WTC11 (cell line): ENCODE measurements at regions of chr1 and their contacts with region 1.

Region 1: GRCh38 chr1:49036700-49037099 is 260.0 kb upstream of the BEND5 start:
- DNase-seq: peak; percentile 24
- ATAC-seq: peak; percentile 92
- H3K4me3 Mint-ChIP-seq: no peak overlapping the region
- H3K27ac Mint-ChIP-seq: no peak overlapping the region
- H3K4me1 Mint-ChIP-seq: no peaks in the 10 kb centered on the region
- H3K27me3 Mint-ChIP-seq: no peaks in the 10 kb centered on the region
- CTCF ChIP-seq: no peak

Region 2: DNA sequence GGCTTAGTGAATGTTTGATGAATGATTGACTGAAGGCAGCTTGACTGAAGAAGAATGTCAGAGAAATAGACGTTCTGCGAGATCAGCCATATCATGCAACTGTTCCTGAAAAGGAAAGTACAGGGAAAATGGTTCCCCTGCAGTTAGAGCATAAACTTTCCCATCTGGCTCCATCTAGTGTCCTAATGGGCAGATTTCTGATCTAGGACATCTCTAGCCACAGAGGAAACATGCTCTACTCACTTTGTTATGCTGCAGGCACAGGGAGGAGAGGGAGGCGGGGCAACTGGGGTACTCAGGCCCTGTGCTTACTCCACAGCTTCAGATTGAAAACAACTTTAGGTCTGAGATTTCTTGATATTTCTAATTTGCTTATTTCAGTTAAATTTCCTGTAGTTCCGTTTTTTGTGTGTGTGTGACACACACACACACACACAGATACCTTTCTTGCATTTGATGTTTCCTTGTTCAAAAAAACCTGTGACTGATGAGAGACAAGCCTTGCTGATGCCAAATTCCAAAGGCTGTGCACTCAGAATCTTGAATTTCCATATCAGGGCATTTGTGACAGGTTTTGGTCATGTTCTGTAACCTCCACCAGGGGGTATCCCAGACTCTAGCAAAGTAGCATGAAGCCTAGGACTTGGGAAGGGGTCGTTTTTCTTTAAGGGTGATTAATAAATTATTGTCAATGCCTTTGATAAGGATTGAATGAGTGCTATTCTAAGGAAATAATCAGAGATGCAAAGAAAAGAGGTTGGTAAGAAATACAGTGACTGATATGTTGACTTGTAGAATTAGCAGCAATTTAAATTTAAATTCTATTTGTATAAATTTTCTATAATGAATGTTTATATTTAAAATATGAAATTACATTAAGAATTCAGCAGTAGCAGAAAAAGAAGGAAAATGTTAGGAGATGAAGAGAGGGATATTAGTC is 120.3 kb before region 1 on chr1:
- CTCF ChIA-PET with region 1: no interaction called
- POLR2A ChIA-PET with region 1: no interaction called
- DNase-seq: peak; percentile 53
- ATAC-seq: peak; percentile 100
- H3K4me3 Mint-ChIP-seq: no peak overlapping the region
- H3K27ac Mint-ChIP-seq: peak overlapping the region; percentile 20; the same call in 1 of the 2 replicates
- H3K4me1 Mint-ChIP-seq: peaks cover 8% of the 10 kb centered on the region
- H3K27me3 Mint-ChIP-seq: no peaks in the 10 kb centered on the region
- CTCF ChIP-seq: no peak

Region 3: GRCh38 chr1:49104575-49104974 is 67.9 kb after region 1 on chr1:
- CTCF ChIA-PET with region 1: no interaction called
- POLR2A ChIA-PET with region 1: no interaction called
- DNase-seq: no peak
- ATAC-seq: no peak
- H3K4me3 Mint-ChIP-seq: no peak overlapping the region
- H3K27ac Mint-ChIP-seq: no peak overlapping the region
- H3K4me1 Mint-ChIP-seq: no peaks in the 10 kb centered on the region
- H3K27me3 Mint-ChIP-seq: no peaks in the 10 kb centered on the region
- CTCF ChIP-seq: no peak

Region 4: DNA sequence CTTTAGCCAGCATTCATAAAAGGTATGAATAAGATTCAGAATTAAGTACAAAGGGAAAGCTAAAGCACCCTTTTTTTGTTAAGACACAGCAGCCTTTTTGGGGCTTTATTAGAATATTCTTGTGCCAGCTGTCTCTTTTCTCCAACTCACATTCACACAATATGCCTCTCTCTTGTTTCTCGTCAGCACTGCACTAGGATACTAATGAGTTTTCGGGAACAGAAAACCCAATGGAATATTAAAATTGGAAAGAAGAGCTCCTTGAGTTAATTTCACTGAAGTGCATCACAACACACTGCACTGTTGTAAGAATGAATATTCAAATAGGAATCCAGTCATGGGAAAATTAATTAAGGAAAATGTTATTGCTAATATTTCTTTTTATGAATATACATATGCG is 150.4 kb after region 1 on chr1:
- CTCF ChIA-PET with region 1: no interaction called
- POLR2A ChIA-PET with region 1: no interaction called
- DNase-seq: no peak
- ATAC-seq: no peak
- H3K4me3 Mint-ChIP-seq: no peak overlapping the region
- H3K27ac Mint-ChIP-seq: no peak overlapping the region
- H3K4me1 Mint-ChIP-seq: no peaks in the 10 kb centered on the region
- H3K27me3 Mint-ChIP-seq: peaks cover 5% of the 10 kb centered on the region; the same call in 1 of the 2 replicates
- CTCF ChIP-seq: no peak

Region 5: DNA sequence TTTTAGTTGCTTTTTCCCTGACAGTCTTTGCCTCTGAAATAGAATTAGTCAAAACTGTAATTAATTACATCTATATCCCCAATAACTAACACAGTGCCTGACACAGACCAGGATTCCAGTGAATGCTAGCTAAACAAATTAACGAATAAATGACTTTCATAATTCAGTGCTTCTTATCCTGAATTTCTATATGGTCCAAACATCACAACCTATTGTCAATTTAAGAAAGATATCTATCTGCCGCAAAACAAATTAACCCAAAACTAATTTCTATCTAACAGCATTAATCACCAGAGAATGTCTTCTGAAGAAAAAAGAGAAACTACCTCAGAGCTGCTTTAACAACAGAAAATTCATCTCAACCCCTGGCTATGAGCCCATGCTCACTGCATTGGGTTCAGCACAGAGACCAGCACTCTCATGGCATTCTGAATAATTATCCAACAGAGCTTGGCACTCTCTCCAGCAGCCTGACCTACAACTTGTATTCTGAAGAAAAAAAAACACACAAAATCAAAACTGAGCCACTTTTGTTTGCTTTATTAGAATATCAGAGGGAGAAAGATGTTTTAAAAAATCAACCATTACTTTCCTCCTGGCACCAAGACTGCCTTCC is 287.3 kb after region 1 on chr1:
- CTCF ChIA-PET with region 1: no interaction called
- POLR2A ChIA-PET with region 1: no interaction called
- DNase-seq: no peak
- ATAC-seq: no peak
- H3K4me3 Mint-ChIP-seq: no peak overlapping the region
- H3K27ac Mint-ChIP-seq: no peak overlapping the region
- H3K4me1 Mint-ChIP-seq: no peaks in the 10 kb centered on the region
- H3K27me3 Mint-ChIP-seq: no peaks in the 10 kb centered on the region; the same call in 1 of the 2 replicates
- CTCF ChIP-seq: no peak

Region 6: DNA sequence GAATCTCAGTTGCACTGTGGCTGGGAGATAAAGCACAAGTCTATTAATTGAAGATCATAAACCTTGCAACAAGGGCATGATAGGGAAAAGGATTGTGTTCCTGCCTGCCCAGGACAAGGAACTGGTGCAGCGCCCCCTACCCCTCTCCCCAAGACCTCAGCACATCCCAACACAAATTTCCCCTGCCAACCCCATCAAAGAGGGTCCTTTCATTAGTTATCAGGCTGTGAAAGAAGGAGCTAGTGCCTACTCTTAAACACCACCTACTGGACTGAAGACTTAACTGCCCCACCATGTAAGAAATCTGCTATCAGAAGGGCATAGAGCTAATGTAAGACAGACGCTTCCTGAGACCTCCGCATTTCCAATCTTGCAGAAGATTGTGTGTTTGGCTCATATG is 614.4 kb after region 1 on chr1:
- CTCF ChIA-PET with region 1: interaction called, 16 read pairs
- POLR2A ChIA-PET with region 1: no interaction called
- DNase-seq: peak; percentile 29
- ATAC-seq: peak; percentile 98
- H3K4me3 Mint-ChIP-seq: no peak overlapping the region
- H3K27ac Mint-ChIP-seq: no peak overlapping the region
- H3K4me1 Mint-ChIP-seq: no peaks in the 10 kb centered on the region
- H3K27me3 Mint-ChIP-seq: no peaks in the 10 kb centered on the region; the same call in 1 of the 2 replicates
- CTCF ChIP-seq: peak; percentile 46